Activated CD4-positive, alpha-beta T cell treated with anti-CD3 and anti-CD28 coated beads, Interleukin-2, amount 10 ng/mL, durations not matched to agents 24 days and 14 days (primary cell): ENCODE measurements at regions of chr3 and their contacts with region 1.

Region 1: GRCh38 chr3:136075218-136075808 is 109.8 kb downstream of the PPP2R3A start:
- DNase-seq: peak; percentile 92
- H3K4me3 Mint-ChIP-seq: no peak overlapping the region
- H3K27ac Mint-ChIP-seq: no peak overlapping the region
- H3K4me1 Mint-ChIP-seq: peaks cover 2% of the 10 kb centered on the region
- H3K27me3 Mint-ChIP-seq: peaks cover 10% of the 10 kb centered on the region

Region 2: DNA sequence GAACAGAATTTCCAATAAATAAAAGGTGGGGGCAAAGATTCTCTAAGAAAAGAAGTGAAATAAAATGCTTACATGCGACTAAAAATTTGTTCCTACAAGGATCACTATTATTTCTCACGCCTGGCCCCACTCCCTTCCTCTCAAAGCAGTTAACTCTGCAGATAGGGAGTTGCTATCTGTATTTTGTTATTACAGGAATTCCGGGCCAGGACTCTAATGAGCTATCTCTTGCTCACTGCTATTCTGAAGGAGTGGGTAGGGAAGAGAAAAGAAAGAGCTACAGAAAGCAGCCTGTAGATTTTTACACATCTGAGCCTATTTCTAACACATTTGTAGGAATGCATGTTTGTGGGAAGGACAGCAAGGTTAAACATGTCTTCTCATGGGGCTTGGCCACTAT is 315.3 kb after region 1 on chr3:
- intact Hi-C with region 1: loop called (anchors 2 kb)
- DNase-seq: no peak
- H3K4me3 Mint-ChIP-seq: no peak overlapping the region
- H3K27ac Mint-ChIP-seq: no peak overlapping the region
- H3K4me1 Mint-ChIP-seq: no peaks in the 10 kb centered on the region
- H3K27me3 Mint-ChIP-seq: no peaks in the 10 kb centered on the region

Region 3: DNA sequence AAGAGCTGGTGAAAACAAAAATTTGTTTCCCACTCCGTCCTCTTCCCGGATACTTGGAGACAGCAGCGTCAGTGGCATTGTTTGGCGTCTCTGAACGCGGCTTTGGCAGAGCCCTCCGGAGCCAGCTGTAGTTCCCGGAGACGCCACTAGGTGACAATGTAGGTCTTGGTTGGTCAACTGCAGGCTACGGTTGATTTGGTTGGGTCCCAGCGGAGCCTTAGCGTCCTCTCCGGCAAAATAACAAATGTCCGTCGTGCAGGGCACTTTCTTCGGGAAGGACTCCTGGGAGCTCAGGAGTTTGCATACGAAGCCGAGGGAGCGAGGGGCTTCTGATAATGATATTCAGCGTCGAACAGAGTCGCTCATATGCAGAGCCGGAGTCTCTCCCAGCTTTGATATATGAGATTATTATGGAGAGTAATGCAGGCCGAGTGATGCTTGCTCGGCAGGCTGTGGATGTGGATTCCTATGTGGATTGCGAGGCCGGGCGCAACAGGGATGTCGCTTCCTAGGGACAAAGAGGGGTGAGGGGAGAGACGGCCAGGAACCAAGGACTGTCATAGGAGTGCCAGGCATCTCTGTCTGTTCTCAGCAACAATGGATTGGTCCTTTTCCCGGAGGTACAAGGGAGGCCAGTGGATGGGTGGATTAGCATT is 957.3 kb after region 1 on chr3:
- intact Hi-C with region 1: loop called (anchors 5 kb)
- DNase-seq: peak; percentile 93
- H3K4me3 Mint-ChIP-seq: peak overlapping the region; percentile 62
- H3K27ac Mint-ChIP-seq: no peak overlapping the region
- H3K4me1 Mint-ChIP-seq: peaks cover 6% of the 10 kb centered on the region
- H3K27me3 Mint-ChIP-seq: peaks cover 33% of the 10 kb centered on the region

Region 4: DNA sequence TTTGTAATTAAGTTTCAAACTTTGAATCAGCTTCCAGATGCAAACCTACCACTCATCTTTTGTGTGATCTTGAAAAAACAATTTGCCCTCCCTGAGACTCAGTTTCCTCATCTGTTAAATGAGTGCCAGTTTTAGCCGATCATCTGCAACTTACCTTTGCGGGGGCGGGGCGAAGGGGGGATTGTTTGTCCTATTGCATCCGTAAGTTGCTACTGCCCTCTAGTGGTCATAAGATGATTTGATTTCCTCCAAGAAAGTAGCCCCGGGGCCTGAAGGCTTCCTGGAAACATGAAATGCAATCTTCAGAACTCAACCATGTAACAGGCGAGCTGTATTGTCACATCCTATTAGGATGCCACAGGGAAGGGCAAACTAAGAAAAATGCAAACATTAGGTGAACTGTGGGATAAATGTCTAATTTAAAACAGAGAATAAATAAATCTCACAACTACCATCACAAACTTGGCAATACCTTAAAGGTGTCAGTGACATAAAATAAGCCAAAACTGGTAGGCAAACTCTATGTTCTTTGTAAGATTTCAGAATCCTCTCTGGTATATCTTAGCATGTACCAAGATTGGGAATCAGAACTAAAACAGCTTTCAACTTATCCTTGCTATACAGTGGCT is 1871.1 kb after region 1 on chr3:
- intact Hi-C with region 1: loop called (anchors 10 kb)
- DNase-seq: peak; percentile 79
- H3K4me3 Mint-ChIP-seq: no peak overlapping the region
- H3K27ac Mint-ChIP-seq: no peak overlapping the region
- H3K4me1 Mint-ChIP-seq: peaks cover 4% of the 10 kb centered on the region
- H3K27me3 Mint-ChIP-seq: no peaks in the 10 kb centered on the region